Spleen (tissue), 13 donors: ENCODE measurements at regions of chr1 and their contacts with region 1.

Region 1: DNA sequence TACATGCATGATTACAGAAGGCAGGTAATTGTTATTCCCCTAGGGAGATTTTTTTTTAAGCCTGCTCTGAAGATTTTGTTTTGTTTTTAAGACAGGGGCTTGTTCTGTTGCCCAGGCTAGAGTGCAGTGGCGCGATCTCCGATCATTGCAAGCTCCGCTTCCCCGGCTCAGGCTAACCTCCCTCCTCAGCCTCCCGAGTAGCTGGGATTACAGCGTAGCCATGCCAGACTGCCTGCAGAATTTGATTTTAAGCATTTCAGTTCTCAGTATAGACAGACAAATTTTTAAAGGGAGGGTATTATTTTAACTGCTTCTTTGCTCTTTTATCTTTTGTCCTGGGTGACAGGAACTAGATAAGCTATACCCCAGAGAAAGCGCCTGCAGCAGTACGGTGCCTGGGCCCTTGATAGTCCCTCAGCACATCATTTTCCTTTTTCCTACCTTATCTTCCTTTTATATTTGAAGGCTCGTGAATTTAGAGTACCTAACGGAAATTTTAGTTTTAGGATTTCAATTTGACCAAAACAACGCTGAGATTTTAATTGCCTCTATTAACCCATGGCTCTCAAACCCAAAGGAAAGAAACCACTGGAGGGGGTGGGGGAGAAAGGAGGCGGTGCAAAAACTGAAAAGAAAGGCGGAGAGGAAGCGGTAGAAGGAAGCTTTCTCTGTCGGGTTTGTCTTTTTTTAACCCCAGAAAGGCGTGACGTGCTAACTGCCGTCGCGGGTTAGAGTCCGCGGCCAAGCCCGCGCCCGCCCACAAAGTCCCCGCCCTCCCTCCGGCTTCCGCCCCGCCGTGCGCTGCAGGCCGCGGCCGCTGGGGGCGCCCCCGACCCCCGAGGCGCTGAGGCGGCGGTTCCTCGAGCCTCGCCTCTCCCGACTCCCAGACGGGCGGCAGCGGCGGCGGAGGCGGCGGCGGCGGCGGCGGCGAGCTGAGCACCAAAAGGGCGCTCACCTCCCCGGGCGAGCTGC is at the start of gene EEIG2:
- DNase-seq: peak; percentile 98
- H3K4me3 ChIP-seq: peak within 1 kb of the TSS; percentile 56 to 84 (median 66)
- H3K27ac ChIP-seq: peak within 1 kb of the TSS; percentile 68 to 86 (median 82)
- H3K4me1 ChIP-seq: peaks cover 21 to 80% (median 56%) of the 10 kb centered on the region in 6 donors
- H3K27me3 ChIP-seq: no peaks in the 10 kb centered on the region
- CTCF ChIP-seq: peak; percentile 39 to 98 (median 94)
- POLR2A ChIP-seq: no peak
- total RNA-seq, gene EEIG2: 17.1 to 21.1 (median 17.8) TPM

Region 2: DNA sequence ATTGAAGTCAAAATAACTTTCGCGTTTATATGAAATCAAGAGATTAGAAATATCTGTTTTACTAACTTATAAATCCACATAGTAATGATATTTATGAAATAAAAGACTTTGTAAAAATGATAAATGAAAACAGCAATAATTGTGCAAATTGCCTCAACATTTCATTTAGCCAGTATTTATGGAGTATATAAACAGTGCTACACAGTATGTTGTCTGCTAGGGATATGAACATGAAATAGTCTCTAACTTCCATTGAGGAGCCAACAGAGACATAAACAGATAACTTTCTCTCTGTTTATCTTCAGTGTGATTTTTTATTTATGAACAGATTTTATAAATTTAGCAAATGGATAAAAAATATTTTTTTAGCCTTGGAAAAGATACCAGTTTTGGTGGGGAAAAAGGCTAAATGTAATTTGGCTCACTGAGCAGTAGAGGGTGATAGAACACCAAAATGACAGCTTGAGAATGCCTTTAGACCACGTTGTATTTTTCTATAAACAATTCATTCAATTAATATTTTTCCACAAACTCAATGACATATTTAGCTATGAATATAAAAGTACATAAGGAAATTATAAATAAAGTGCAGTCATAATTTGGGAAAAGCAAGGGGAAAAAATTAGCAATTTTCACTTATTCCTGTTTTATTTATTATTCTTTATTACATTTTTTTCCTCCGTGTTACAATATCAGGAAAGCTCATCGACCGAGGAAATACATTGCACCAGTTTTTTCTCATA is 47.1 kb before region 1 on chr1:
- intact Hi-C with region 1: loop called (anchors 2 kb)
- DNase-seq: no peak
- H3K4me3 ChIP-seq: no peak overlapping the region
- H3K27ac ChIP-seq: no peak overlapping the region
- H3K4me1 ChIP-seq: no peaks in the 10 kb centered on the region
- H3K27me3 ChIP-seq: no peaks in the 10 kb centered on the region
- CTCF ChIP-seq: peak; percentile 57 to 89 (median 85)
- POLR2A ChIP-seq: no peak

Region 3: GRCh38 chr1:108646648-108647269 is 87.3 kb after region 1 on chr1:
- intact Hi-C with region 1: loop called (anchors 5 kb)
- DNase-seq: peak; percentile 96
- H3K4me3 ChIP-seq: peak overlapping the region in 1 of 8 donors; percentile 50
- H3K27ac ChIP-seq: peak overlapping the region; percentile 64 to 95 (median 92)
- H3K4me1 ChIP-seq: peaks cover 13 to 59% (median 49%) of the 10 kb centered on the region in 6 donors
- H3K27me3 ChIP-seq: no peaks in the 10 kb centered on the region
- CTCF ChIP-seq: peak in 1 of 11 experiments; percentile 18
- POLR2A ChIP-seq: peak in 1 of 3 donors; percentile 37

Region 4: GRCh38 chr1:108661030-108661620 is 101.6 kb after region 1 on chr1 and contains the start of gene HENMT1:
- intact Hi-C with region 1: no loop called
- DNase-seq: peak; percentile 94
- H3K4me3 ChIP-seq: peak within 1 kb of the TSS; percentile 40 to 75 (median 54)
- H3K27ac ChIP-seq: peak within 1 kb of the TSS; percentile 96 to 100 (median 98)
- H3K4me1 ChIP-seq: peaks cover 4 to 46% (median 20%) of the 10 kb centered on the region in 6 donors
- H3K27me3 ChIP-seq: no peaks in the 10 kb centered on the region
- CTCF ChIP-seq: no peak
- POLR2A ChIP-seq: no peak
- total RNA-seq, gene HENMT1: 7.3 to 16.5 (median 11.5) TPM